GM12878 (cell line): ENCODE measurements at regions of chr3 and their contacts with region 1.

Region 1: GRCh38 chr3:186540221-186540834 is 3.9 kb downstream of the CRYGS start:
- DNase-seq: peak; percentile 76
- ATAC-seq: peak; percentile 84
- H3K4me3 ChIP-seq: no peak overlapping the region
- H3K27ac ChIP-seq: peak overlapping the region; percentile 30
- H3K4me1 ChIP-seq: peaks cover 50% of the 10 kb centered on the region
- H3K27me3 ChIP-seq: no peaks in the 10 kb centered on the region
- CTCF ChIP-seq: peak; percentile 48 to 91 (median 72); a peak in 5 of 6 replicates
- EP300 ChIP-seq: no peak
- POLR2A ChIP-seq: no peak
- RAD21 ChIP-seq: peak; percentile 99

Region 2: DNA sequence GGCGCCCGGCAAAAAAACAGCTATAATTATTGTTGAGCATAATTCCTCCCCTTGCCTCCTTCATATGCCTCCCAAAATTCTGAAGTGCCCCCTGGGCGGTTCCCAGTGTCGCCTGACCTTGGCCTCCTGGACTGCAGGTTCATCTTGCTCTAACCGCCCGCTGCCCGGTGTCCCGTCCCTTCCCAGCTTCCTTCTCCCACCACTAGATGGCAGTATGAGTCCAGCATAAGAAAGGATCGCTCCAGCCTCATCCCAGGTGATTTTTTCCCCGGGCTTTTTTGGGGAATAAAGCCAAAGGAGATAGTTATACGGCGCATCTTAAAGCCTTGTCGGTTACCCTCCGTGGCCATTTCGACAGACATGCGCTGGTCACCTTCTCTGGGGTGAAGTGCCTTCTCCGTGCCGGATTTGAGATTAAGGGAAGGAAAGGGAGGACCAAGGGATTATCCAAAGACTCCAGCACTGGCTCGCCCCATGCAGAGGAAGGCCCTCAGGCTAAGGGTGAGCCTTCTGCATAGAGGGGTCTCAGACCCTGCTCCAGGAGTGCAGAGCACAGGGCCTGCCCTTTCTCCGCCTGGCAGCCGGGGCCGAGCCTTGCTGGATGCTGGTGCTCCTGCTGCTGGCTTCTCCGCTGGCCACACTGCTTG is 556.7 kb before region 1 on chr3:
- CTCF ChIA-PET with region 1: interaction called, 73 read pairs
- POLR2A ChIA-PET with region 1: interaction called, 3 read pairs
- RAD21 ChIA-PET with region 1: interaction called, 133 read pairs
- SMC1A ChIA-PET with region 1: interaction called, 85 read pairs
- in situ Hi-C with region 1: loop called (anchors 5 kb)
- intact Hi-C with region 1: loop called (anchors 1 kb)
- DNase-seq: no peak
- ATAC-seq: peak; percentile 96
- H3K4me3 ChIP-seq: no peak overlapping the region
- H3K27ac ChIP-seq: no peak overlapping the region
- H3K4me1 ChIP-seq: no peaks in the 10 kb centered on the region
- H3K27me3 ChIP-seq: no peaks in the 10 kb centered on the region
- CTCF ChIP-seq: peak; percentile 84 to 87 (median 86)
- EP300 ChIP-seq: no peak
- POLR2A ChIP-seq: no peak
- RAD21 ChIP-seq: peak; percentile 99

Region 3: GRCh38 chr3:186259612-186260383 is 280.5 kb before region 1 on chr3:
- CTCF ChIA-PET with region 1: interaction called, 847 read pairs
- POLR2A ChIA-PET with region 1: interaction called, 16 read pairs
- RAD21 ChIA-PET with region 1: interaction called, 495 read pairs
- SMC1A ChIA-PET with region 1: interaction called, 655 read pairs
- in situ Hi-C with region 1: loop called (anchors 5 kb)
- intact Hi-C with region 1: loop called (anchors 1 kb)
- DNase-seq: no peak
- ATAC-seq: peak; percentile 89
- H3K4me3 ChIP-seq: no peak overlapping the region
- H3K27ac ChIP-seq: no peak overlapping the region
- H3K4me1 ChIP-seq: peaks cover 14% of the 10 kb centered on the region
- H3K27me3 ChIP-seq: no peaks in the 10 kb centered on the region
- CTCF ChIP-seq: peak; percentile 96 to 99 (median 97)
- EP300 ChIP-seq: no peak
- POLR2A ChIP-seq: no peak
- RAD21 ChIP-seq: peak; percentile 94

Region 4: GRCh38 chr3:186432189-186432588 is 108.1 kb before region 1 on chr3:
- CTCF ChIA-PET with region 1: interaction called, 4 read pairs
- POLR2A ChIA-PET with region 1: no interaction called
- RAD21 ChIA-PET with region 1: interaction called, 3 read pairs
- SMC1A ChIA-PET with region 1: interaction called, 13 read pairs
- in situ Hi-C with region 1: no loop called
- intact Hi-C with region 1: no loop called
- DNase-seq: no peak
- ATAC-seq: peak; percentile 74
- H3K4me3 ChIP-seq: no peak overlapping the region
- H3K27ac ChIP-seq: no peak overlapping the region
- H3K4me1 ChIP-seq: peaks cover 7% of the 10 kb centered on the region
- H3K27me3 ChIP-seq: no peaks in the 10 kb centered on the region
- CTCF ChIP-seq: no peak
- EP300 ChIP-seq: no peak
- POLR2A ChIP-seq: no peak
- RAD21 ChIP-seq: no peak

Region 5: GRCh38 chr3:186496016-186496415 is 44.3 kb before region 1 on chr3:
- CTCF ChIA-PET with region 1: interaction called, 16 read pairs
- POLR2A ChIA-PET with region 1: interaction called, 3 read pairs
- RAD21 ChIA-PET with region 1: interaction called, 4 read pairs
- SMC1A ChIA-PET with region 1: interaction called, 10 read pairs
- in situ Hi-C with region 1: no loop called
- intact Hi-C with region 1: no loop called
- DNase-seq: no peak
- ATAC-seq: peak; percentile 23; the same call in 1 of the 3 replicates
- H3K4me3 ChIP-seq: no peak overlapping the region
- H3K27ac ChIP-seq: no peak overlapping the region
- H3K4me1 ChIP-seq: no peaks in the 10 kb centered on the region
- H3K27me3 ChIP-seq: no peaks in the 10 kb centered on the region
- CTCF ChIP-seq: no peak
- EP300 ChIP-seq: no peak
- POLR2A ChIP-seq: no peak
- RAD21 ChIP-seq: no peak

Region 6: GRCh38 chr3:186551387-186551786 is 11.1 kb after region 1 on chr3:
- CTCF ChIA-PET with region 1: interaction called, 23 read pairs
- POLR2A ChIA-PET with region 1: no interaction called
- RAD21 ChIA-PET with region 1: interaction called, 6 read pairs
- SMC1A ChIA-PET with region 1: interaction called, 27 read pairs
- in situ Hi-C with region 1: no loop called
- intact Hi-C with region 1: no loop called
- DNase-seq: no peak
- ATAC-seq: no peak
- H3K4me3 ChIP-seq: no peak overlapping the region
- H3K27ac ChIP-seq: no peak overlapping the region
- H3K4me1 ChIP-seq: no peaks in the 10 kb centered on the region
- H3K27me3 ChIP-seq: no peaks in the 10 kb centered on the region
- CTCF ChIP-seq: no peak
- EP300 ChIP-seq: no peak
- POLR2A ChIP-seq: no peak
- RAD21 ChIP-seq: no peak

Region 7: GRCh38 chr3:186617038-186617946 is 77.0 kb after region 1 on chr3:
- CTCF ChIA-PET with region 1: interaction called, 73 read pairs
- POLR2A ChIA-PET with region 1: no interaction called
- RAD21 ChIA-PET with region 1: interaction called, 41 read pairs
- SMC1A ChIA-PET with region 1: interaction called, 38 read pairs
- in situ Hi-C with region 1: no loop called
- intact Hi-C with region 1: no loop called
- DNase-seq: peak; percentile 59
- ATAC-seq: peak; percentile 98
- H3K4me3 ChIP-seq: no peak overlapping the region; the same call in 1 of the 2 replicates
- H3K27ac ChIP-seq: no peak overlapping the region
- H3K4me1 ChIP-seq: peaks cover 7% of the 10 kb centered on the region
- H3K27me3 ChIP-seq: peaks cover 2 to 3% of the 10 kb centered on the region in 2 experiments; a peak in 3 of 4 replicates
- CTCF ChIP-seq: peak; percentile 94 to 97 (median 96)
- EP300 ChIP-seq: no peak
- POLR2A ChIP-seq: no peak
- RAD21 ChIP-seq: peak; percentile 77